Lower lobe of right lung (tissue), 2 donors: ENCODE measurements at regions of chr9 and their contacts with region 1.

Region 1: GRCh38 chr9:72856972-72857623 is 95.8 kb downstream of the ALDH1A1 start:
- DNase-seq: no peak
- ATAC-seq: peak in 1 of 2 donors; percentile 79
- H3K4me3 ChIP-seq: no peak overlapping the region
- H3K27ac ChIP-seq: no peak overlapping the region
- H3K4me1 ChIP-seq: peaks cover 10% of the 10 kb centered on the region
- H3K27me3 ChIP-seq: no peaks in the 10 kb centered on the region
- CTCF ChIP-seq: peak; percentile 68

Region 2: GRCh38 chr9:73023025-73023541 is 166.0 kb after region 1 on chr9:
- intact Hi-C with region 1: loop called (anchors 5 kb)
- DNase-seq: no peak
- ATAC-seq: peak; percentile 58 to 79
- H3K4me3 ChIP-seq: no peak overlapping the region
- H3K27ac ChIP-seq: no peak overlapping the region
- H3K4me1 ChIP-seq: peaks cover 5% of the 10 kb centered on the region
- H3K27me3 ChIP-seq: no peaks in the 10 kb centered on the region
- CTCF ChIP-seq: peak; percentile 80